ENCODE measurements at regions of chrX and their contacts with region 1.

Region 1: DNA sequence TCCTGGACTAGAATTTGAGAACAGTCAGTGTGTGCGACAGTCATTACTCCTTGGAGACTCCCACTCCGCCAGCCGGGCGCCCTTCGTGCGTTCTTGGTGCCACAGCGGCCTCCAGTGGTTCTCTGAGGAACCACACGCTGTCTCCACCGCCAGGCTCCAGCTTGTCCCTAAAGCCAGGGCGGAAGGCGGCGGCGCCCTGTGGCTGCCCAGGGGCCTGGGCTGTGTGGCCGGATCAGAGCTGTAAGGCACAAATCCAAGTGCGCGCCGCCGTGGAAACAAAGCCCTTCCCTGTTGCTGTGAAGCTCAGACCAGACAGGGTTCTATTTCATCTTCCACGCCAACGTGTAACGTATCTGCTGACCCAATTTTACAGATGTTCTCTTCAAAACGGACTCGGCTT is 34.2 kb downstream of the IDS start:
- DNase-seq: peak; percentile 48 to 74 (median 71)
- H3K4me3 ChIP-seq: no peak overlapping the region
- H3K27ac ChIP-seq: no peak overlapping the region
- H3K4me1 ChIP-seq: peaks cover 0 to 2% (median 0%) of the 10 kb centered on the region in 4 experiments
- H3K27me3 ChIP-seq: peaks cover 0 to 10% (median 0%) of the 10 kb centered on the region in 5 experiments

Region 2: DNA sequence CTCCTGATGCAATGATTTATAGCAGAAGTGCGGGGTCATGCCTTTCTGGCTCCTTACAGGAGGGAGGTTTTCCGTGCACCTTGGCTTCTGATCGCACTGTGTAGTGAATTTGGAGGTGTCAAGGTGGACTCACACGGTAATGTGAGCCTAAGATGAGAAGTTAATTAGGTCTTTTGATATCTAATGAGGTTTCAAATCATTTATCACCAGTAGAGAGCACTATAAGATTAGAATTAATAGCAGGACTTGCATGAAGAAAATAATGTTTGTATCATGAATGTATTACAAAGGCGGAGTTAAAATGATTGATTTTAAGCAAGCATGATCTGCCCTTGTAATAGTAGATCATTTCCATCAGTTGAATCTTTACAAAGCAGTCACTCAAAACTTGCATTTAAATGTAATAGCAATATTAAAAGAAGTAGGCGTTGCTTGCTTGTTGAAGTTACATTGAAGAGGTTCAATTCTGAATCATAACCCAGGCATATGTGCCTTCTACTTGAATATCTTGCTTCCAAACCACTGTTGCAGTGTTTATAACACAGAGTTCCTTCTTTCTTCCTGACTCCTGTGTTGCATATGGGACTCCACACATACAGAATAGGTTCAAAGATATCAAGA is 1337.7 kb before region 1 on chrX:
- CTCF ChIA-PET with region 1: interaction called, 10 read pairs
- POLR2A ChIA-PET with region 1: no interaction called
- DNase-seq: peak; percentile 21 to 41 (median 40)
- H3K4me3 ChIP-seq: no peak overlapping the region
- H3K27ac ChIP-seq: no peak overlapping the region
- H3K4me1 ChIP-seq: no peaks in the 10 kb centered on the region
- H3K27me3 ChIP-seq: no peaks in the 10 kb centered on the region

Region 3: GRCh38 chrX:149386986-149387385 is 84.0 kb before region 1 on chrX:
- CTCF ChIA-PET with region 1: no interaction called
- POLR2A ChIA-PET with region 1: no interaction called
- DNase-seq: no peak
- H3K4me3 ChIP-seq: no peak overlapping the region
- H3K27ac ChIP-seq: no peak overlapping the region
- H3K4me1 ChIP-seq: no peaks in the 10 kb centered on the region
- H3K27me3 ChIP-seq: no peaks in the 10 kb centered on the region

Region 4: DNA sequence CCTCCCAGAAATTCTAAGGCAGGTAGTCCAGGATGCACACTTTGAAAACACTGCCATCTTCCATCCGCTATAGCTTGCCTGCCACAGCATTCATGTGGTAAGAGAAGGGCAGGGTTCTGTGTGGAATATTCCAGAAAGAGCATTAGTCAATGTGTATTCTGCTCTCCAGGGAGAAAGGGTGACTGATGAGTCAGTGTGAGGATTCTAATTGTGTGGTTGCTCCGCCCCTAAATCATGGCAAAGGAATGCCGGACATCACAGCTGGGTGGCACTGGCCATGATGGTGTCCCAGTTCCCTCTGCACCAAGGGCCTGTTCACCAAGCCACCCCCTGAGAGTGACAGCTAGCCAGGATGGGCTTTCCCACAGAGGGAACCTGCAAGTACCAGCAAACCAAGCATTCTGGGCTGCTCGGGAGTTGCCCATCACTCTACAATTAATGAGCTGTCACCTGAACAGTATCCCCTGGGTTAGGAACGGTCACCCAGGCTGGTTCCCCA is 24.7 kb after region 1 on chrX:
- CTCF ChIA-PET with region 1: no interaction called
- POLR2A ChIA-PET with region 1: no interaction called
- DNase-seq: no peak
- H3K4me3 ChIP-seq: no peak overlapping the region
- H3K27ac ChIP-seq: no peak overlapping the region
- H3K4me1 ChIP-seq: no peaks in the 10 kb centered on the region
- H3K27me3 ChIP-seq: peaks cover 0 to 5% (median 0%) of the 10 kb centered on the region in 5 experiments